ENCODE measurements at regions of chr20 and their contacts with region 1.

Region 1: GRCh38 chr20:31674895-31675827 is 37.4 kb downstream of the COX4I2 start:
- DNase-seq: no peak
- ATAC-seq: peak; percentile 23
- H3K4me3 ChIP-seq: no peak overlapping the region
- H3K27ac ChIP-seq: peak overlapping the region; percentile 27
- H3K4me1 ChIP-seq: peaks cover 72% of the 10 kb centered on the region
- H3K27me3 ChIP-seq: no peaks in the 10 kb centered on the region
- CTCF ChIP-seq: no peak

Region 2: DNA sequence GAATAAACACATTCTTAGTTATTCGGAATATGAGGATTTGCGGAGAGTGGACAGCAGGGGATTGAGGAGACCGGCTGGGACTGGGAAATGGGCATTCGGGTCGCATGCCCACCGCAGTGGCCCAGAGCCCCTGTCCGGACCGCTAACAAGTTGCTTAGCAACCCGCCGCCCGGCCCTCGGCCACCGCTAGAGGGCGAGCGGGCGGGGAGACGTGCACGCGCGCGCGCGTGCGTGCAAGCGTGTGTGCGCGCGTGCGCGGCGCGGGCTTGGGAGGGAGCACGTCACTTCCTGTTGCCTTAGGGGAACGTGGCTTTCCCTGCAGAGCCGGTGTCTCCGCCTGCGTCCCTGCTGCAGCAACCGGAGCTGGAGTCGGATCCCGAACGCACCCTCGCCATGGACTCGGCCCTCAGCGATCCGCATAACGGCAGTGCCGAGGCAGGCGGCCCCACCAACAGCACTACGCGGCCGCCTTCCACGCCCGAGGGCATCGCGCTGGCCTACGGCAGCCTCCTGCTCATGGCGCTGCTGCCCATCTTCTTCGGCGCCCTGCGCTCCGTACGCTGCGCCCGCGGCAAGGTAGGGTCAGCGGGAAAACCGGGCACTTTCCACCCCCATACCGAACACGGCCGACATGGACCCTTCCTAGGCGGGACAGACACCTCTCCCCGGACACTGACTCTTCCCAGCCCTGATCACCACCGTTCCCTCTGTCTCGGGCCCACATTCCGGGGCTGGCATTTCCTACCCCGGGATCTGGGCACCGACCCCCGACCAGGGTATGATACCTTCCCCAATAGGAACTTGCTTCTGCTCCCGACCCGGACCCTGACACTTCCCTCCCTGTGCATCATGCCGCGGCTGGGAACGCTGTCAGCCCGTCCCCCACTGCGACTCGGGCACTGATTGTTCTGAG is 160.7 kb before region 1 on chr20 and contains the start of gene HM13:
- CTCF ChIA-PET with region 1: no interaction called
- POLR2A ChIA-PET with region 1: interaction called, 20 read pairs
- in situ Hi-C with region 1: no loop called
- intact Hi-C with region 1: no loop called
- DNase-seq: peak; percentile 89
- ATAC-seq: peak; percentile 94
- H3K4me3 ChIP-seq: peak within 1 kb of the TSS; percentile 70 to 78
- H3K27ac ChIP-seq: peak within 1 kb of the TSS; percentile 90
- H3K4me1 ChIP-seq: peaks cover 27% of the 10 kb centered on the region
- H3K27me3 ChIP-seq: no peaks in the 10 kb centered on the region
- CTCF ChIP-seq: peak; percentile 100
- total RNA-seq, gene HM13: 337 TPM

Region 3: GRCh38 chr20:31605031-31605901 is 69.9 kb before region 1 on chr20 and contains the start of gene ID1:
- CTCF ChIA-PET with region 1: no interaction called
- POLR2A ChIA-PET with region 1: interaction called, 11 read pairs
- in situ Hi-C with region 1: no loop called
- intact Hi-C with region 1: no loop called
- DNase-seq: peak; percentile 95
- ATAC-seq: peak; percentile 67
- H3K4me3 ChIP-seq: peak within 1 kb of the TSS; percentile 73 to 88
- H3K27ac ChIP-seq: peak within 1 kb of the TSS; percentile 100
- H3K4me1 ChIP-seq: peaks cover 58% of the 10 kb centered on the region
- H3K27me3 ChIP-seq: no peaks in the 10 kb centered on the region
- CTCF ChIP-seq: no peak
- total RNA-seq, gene ID1: 152 TPM

Region 4: GRCh38 chr20:31652917-31653396 is 22.2 kb before region 1 on chr20:
- CTCF ChIA-PET with region 1: interaction called, 13 read pairs
- POLR2A ChIA-PET with region 1: no interaction called
- in situ Hi-C with region 1: no loop called
- intact Hi-C with region 1: no loop called
- DNase-seq: no peak
- ATAC-seq: no peak
- H3K4me3 ChIP-seq: no peak overlapping the region
- H3K27ac ChIP-seq: no peak overlapping the region
- H3K4me1 ChIP-seq: no peaks in the 10 kb centered on the region
- H3K27me3 ChIP-seq: no peaks in the 10 kb centered on the region
- CTCF ChIP-seq: no peak

Region 5: DNA sequence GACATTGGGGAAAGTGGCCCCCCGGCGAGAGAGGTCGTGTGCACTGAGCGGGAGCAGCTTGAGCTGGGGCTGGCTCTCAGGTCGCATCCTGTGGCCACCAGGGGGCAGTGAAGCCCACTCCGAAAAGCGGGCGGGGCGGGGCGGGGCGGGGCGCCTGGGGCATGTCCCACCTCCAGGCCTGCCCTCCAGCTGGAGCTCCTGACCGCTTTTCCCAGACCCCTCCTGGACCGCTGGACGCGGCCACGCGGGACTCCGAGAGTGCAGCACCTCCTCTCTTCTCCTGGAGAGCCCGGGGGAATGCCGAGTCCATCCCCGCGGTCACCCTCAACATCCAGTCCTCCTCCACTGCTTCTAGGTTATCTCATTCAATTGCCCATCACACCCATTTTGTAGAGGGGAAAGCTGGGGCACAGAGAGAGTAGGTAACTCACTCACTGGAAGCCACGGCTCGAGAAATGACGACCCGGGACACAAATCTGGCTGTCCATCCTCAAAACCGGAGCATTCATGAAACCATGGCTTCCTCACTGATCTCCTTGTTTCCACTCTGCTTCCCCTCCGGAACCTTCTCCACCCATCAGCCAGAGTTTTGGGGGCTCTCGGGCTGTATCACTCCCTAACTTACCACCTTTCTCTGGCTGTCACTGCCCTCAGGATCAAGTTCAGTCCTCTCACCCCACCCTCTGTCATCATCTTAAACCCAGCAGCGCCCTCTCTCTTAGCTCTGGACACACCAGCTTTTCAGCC is 13.4 kb before region 1 on chr20:
- CTCF ChIA-PET with region 1: interaction called, 19 read pairs
- POLR2A ChIA-PET with region 1: interaction called, 5 read pairs
- in situ Hi-C with region 1: no loop called
- intact Hi-C with region 1: no loop called
- DNase-seq: peak; percentile 74
- ATAC-seq: peak; percentile 81
- H3K4me3 ChIP-seq: peak overlapping the region; percentile 27 to 64
- H3K27ac ChIP-seq: peak overlapping the region; percentile 78
- H3K4me1 ChIP-seq: peaks cover 40% of the 10 kb centered on the region
- H3K27me3 ChIP-seq: no peaks in the 10 kb centered on the region
- CTCF ChIP-seq: peak; percentile 98

Region 6: GRCh38 chr20:31738729-31739561 is 63.8 kb after region 1 on chr20 and contains the start of gene TPX2:
- CTCF ChIA-PET with region 1: no interaction called
- POLR2A ChIA-PET with region 1: no interaction called
- in situ Hi-C with region 1: no loop called
- intact Hi-C with region 1: no loop called
- DNase-seq: peak; percentile 100
- ATAC-seq: peak; percentile 99
- H3K4me3 ChIP-seq: peak within 1 kb of the TSS; percentile 71 to 79
- H3K27ac ChIP-seq: peak within 1 kb of the TSS; percentile 99
- H3K4me1 ChIP-seq: peaks cover 24% of the 10 kb centered on the region
- H3K27me3 ChIP-seq: no peaks in the 10 kb centered on the region
- CTCF ChIP-seq: no peak
- total RNA-seq, gene TPX2: 248 TPM

Region 7: GRCh38 chr20:31788578-31788977 is 113.4 kb after region 1 on chr20:
- CTCF ChIA-PET with region 1: no interaction called
- POLR2A ChIA-PET with region 1: no interaction called
- in situ Hi-C with region 1: no loop called
- intact Hi-C with region 1: no loop called
- DNase-seq: no peak
- ATAC-seq: peak; percentile 72
- H3K4me3 ChIP-seq: no peak overlapping the region
- H3K27ac ChIP-seq: no peak overlapping the region
- H3K4me1 ChIP-seq: no peaks in the 10 kb centered on the region
- H3K27me3 ChIP-seq: no peaks in the 10 kb centered on the region
- CTCF ChIP-seq: peak; percentile 64

Region 8: DNA sequence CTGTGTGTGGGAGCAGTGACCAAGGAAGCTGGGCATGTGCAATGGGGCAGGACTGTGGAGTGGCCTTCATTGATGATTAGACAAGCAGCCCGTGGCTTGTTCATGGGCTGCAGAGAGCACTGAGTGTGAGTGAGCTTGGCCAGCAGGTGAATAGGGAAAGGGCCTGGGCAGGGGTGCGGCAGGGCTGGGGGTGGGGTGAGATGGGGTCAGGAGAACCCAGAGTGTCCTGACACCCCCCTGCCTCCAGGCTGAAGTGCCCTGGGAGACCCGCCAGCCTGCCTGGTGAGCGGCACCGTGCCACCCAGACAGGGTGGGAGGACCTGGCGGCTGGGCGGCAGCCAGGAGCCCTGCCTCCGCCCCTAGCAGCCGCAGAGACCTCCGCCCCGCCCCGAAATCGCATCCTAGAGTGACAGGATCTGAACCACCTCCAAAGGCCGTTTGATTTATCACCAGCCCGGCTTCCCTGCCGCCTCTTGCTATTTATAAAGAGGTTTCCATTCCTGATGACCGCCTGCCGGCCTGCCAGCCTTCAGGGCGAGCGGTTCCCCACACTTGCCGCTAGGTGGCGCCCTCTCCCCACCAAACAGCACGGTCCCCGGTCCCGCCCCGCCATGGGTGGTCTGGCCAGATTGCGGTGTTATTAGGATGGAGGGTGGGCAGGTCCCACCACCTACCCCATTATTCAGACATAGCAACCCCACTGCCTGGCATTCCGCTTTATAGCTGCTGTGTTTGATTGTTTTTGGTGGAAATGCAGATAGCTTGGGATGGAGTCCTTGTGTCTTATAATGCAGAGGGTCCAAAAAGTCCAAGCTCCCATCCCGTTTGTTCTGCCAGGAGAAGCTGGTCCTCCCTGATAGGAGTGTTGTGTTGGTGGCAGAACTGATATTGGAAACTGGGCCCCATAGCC is 147.5 kb after region 1 on chr20:
- CTCF ChIA-PET with region 1: interaction called, 11 read pairs
- POLR2A ChIA-PET with region 1: no interaction called
- in situ Hi-C with region 1: no loop called
- intact Hi-C with region 1: no loop called
- DNase-seq: no peak
- ATAC-seq: peak; percentile 89
- H3K4me3 ChIP-seq: peak overlapping the region; percentile 14 to 44
- H3K27ac ChIP-seq: no peak overlapping the region
- H3K4me1 ChIP-seq: peaks cover 12% of the 10 kb centered on the region
- H3K27me3 ChIP-seq: no peaks in the 10 kb centered on the region
- CTCF ChIP-seq: peak; percentile 100